Activated B cell treated with CpG ODN at 0.5 μM for 24 hours (primary cell): ENCODE measurements at regions of chr3 and their contacts with region 1.

Region 1: DNA sequence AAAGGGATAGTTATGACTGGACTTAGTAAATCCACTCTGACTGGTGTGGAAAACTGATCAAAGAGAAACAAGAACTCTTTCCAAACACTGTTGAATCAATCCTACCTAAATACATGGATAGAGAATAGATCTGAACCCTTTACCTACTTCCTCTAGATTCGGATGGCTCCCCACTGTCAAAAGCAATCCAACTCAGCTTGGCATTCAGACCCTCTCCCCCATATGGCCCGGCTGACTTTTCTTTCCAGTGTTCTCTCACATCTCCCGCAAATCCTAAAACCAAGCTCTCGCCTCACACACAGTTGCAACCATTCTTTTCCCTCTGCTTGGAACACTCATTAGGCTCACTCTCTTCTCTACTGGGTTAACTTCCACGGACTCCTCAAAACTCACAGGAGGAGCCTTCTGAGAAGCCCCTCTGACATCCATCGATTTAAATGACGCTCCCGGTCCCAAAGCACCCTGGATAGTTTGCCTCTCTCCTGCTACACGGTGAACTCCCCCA is 639 bp downstream of the SPICE1 start:
- DNase-seq: no peak
- ATAC-seq: no peak
- H3K4me3 Mint-ChIP-seq: no peak overlapping the region
- H3K27ac Mint-ChIP-seq: no peak overlapping the region
- H3K4me1 Mint-ChIP-seq: peaks cover 7% of the 10 kb centered on the region
- H3K27me3 Mint-ChIP-seq: peaks cover 16% of the 10 kb centered on the region
- CTCF ChIP-seq: no peak

Region 2: DNA sequence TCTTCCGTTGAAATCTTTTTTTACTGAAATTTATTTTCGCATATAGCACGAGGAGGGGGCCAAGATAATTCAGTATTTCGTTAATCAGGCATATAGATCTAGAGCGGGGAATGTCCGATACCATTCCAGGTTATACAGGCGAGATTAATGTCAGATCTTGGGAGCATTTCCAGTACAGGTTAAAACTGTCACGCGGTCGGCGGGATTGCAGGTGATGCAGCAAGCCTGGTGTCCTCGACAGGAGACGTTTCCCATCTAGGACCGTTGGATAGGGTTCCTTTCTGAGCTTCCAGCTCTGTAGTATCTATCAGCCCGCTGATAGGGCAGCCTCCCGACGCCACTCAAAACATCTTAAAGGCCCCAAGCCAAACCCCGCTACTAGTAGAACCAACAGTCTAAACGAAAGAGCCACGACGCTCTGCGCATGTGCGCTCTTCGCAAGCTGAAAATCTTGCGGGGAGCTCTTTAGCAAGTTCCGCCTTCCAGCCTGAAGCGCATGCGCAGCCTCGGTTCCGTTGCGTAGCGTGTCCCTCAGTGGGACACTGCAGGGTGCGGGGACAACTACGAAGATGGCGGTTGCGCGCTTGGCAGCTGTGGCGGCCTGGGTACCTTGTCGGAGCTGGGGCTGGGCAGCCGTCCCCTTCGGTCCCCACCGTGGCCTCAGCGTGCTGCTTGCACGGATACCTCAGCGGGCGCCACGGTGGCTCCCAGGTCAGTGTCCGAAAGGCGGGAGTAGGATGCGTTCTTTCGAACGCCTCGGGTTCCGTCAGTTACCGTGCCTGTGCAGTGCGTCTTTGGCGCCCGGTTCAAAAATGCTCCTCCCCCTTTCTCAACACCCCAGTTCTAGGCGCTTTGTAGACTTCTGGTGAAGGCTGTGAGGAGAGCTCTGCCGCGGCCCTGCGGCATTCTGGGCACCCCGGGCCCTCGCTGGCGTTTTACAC is 1535.6 kb before region 1 on chr3 and contains the start of gene ABHD10:
- CTCF ChIA-PET with region 1: no interaction called
- POLR2A ChIA-PET with region 1: interaction called, 11 read pairs
- intact Hi-C with region 1: no loop called
- DNase-seq: peak; percentile 90
- ATAC-seq: peak; percentile 94
- H3K4me3 Mint-ChIP-seq: peak within 1 kb of the TSS; percentile 93
- H3K27ac Mint-ChIP-seq: peak within 1 kb of the TSS; percentile 94
- H3K4me1 Mint-ChIP-seq: peaks cover 43% of the 10 kb centered on the region
- H3K27me3 Mint-ChIP-seq: no peaks in the 10 kb centered on the region
- CTCF ChIP-seq: no peak
- total RNA-seq, gene ABHD10: 25.2 and 28.4 TPM in 2 replicates

Region 3: DNA sequence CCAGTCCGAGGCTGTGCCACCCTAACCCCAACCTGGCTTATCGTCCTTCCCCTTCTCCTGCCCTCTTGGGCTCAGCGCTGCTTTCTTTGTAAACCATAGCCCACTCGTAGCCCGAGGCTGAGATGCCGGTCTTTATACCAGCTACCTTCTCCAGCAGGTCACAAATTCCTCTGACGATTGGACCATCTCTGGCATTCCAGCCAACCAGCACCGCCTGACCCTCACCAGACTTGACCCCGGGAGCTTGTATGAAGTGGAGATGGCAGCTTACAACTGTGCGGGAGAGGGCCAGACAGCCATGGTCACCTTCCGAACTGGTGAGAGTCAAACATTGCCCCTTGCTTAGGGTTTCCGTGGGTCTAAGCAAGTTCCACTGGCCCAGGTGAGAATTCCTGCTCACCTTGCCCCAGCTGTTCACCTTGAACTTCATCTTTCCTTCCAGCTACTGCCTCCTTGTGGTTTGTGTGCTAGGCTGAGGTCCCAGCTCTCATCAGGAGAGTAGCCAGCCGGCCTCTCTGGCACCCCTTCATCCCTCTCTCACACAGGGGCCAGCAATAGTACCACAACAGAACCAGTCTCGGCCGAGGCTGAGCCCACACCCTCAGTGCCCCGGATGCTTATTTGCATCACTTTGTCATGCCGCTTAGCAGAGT is 236.2 kb before region 1 on chr3:
- CTCF ChIA-PET with region 1: no interaction called
- POLR2A ChIA-PET with region 1: no interaction called
- intact Hi-C with region 1: no loop called
- DNase-seq: no peak
- ATAC-seq: no peak
- H3K4me3 Mint-ChIP-seq: peak overlapping the region; percentile 3
- H3K27ac Mint-ChIP-seq: peak overlapping the region; percentile 51
- H3K4me1 Mint-ChIP-seq: peaks cover 32% of the 10 kb centered on the region
- H3K27me3 Mint-ChIP-seq: no peaks in the 10 kb centered on the region
- CTCF ChIP-seq: no peak

Region 4: GRCh38 chr3:113495035-113495434 is 19.3 kb before region 1 on chr3:
- CTCF ChIA-PET with region 1: interaction called, 8 read pairs
- POLR2A ChIA-PET with region 1: interaction called, 6 read pairs
- intact Hi-C with region 1: loop called (anchors 1 kb)
- DNase-seq: no peak
- ATAC-seq: no peak
- H3K4me3 Mint-ChIP-seq: no peak overlapping the region
- H3K27ac Mint-ChIP-seq: no peak overlapping the region
- H3K4me1 Mint-ChIP-seq: no peaks in the 10 kb centered on the region
- H3K27me3 Mint-ChIP-seq: no peaks in the 10 kb centered on the region
- CTCF ChIP-seq: no peak

Region 5: GRCh38 chr3:113546414-113546893 is 32.1 kb after region 1 on chr3:
- CTCF ChIA-PET with region 1: no interaction called
- POLR2A ChIA-PET with region 1: interaction called, 23 read pairs
- intact Hi-C with region 1: no loop called
- DNase-seq: no peak
- ATAC-seq: peak; percentile 34
- H3K4me3 Mint-ChIP-seq: peak overlapping the region; percentile 16
- H3K27ac Mint-ChIP-seq: peak overlapping the region; percentile 5
- H3K4me1 Mint-ChIP-seq: peaks cover 29% of the 10 kb centered on the region
- H3K27me3 Mint-ChIP-seq: no peaks in the 10 kb centered on the region
- CTCF ChIP-seq: no peak

Region 6: GRCh38 chr3:113560271-113560670 is 46.0 kb after region 1 on chr3:
- CTCF ChIA-PET with region 1: no interaction called
- POLR2A ChIA-PET with region 1: no interaction called
- intact Hi-C with region 1: no loop called
- DNase-seq: no peak
- ATAC-seq: no peak
- H3K4me3 Mint-ChIP-seq: no peak overlapping the region
- H3K27ac Mint-ChIP-seq: no peak overlapping the region
- H3K4me1 Mint-ChIP-seq: peaks cover 17% of the 10 kb centered on the region
- H3K27me3 Mint-ChIP-seq: no peaks in the 10 kb centered on the region
- CTCF ChIP-seq: no peak

Region 7: DNA sequence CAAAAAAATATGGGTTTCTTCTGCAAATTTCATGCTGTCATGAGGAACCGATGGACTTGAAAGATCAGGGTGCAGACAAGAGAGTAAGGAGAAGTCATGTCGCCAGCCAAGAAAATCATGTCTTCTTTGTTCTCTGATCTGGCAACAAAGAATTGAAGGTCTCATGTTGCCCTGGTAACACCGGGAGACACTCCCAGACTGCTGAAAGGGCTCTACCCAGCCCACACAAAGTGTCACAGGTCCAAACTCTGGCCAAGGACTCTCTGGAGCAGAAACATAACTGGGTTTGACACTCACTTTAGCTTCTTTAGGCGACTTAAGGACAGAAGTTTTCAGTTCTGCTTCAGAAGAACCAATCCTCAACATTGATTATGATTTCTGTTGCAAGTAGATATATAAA is 60.9 kb after region 1 on chr3:
- CTCF ChIA-PET with region 1: interaction called, 13 read pairs
- POLR2A ChIA-PET with region 1: no interaction called
- intact Hi-C with region 1: no loop called
- DNase-seq: no peak
- ATAC-seq: no peak
- H3K4me3 Mint-ChIP-seq: no peak overlapping the region
- H3K27ac Mint-ChIP-seq: peak overlapping the region; percentile 31
- H3K4me1 Mint-ChIP-seq: peaks cover 5% of the 10 kb centered on the region
- H3K27me3 Mint-ChIP-seq: no peaks in the 10 kb centered on the region
- CTCF ChIP-seq: no peak

Region 8: GRCh38 chr3:113614402-113614801 is 100.1 kb after region 1 on chr3:
- CTCF ChIA-PET with region 1: no interaction called
- POLR2A ChIA-PET with region 1: no interaction called
- intact Hi-C with region 1: no loop called
- DNase-seq: no peak
- ATAC-seq: no peak
- H3K4me3 Mint-ChIP-seq: no peak overlapping the region
- H3K27ac Mint-ChIP-seq: no peak overlapping the region
- H3K4me1 Mint-ChIP-seq: peaks cover 2% of the 10 kb centered on the region
- H3K27me3 Mint-ChIP-seq: no peaks in the 10 kb centered on the region
- CTCF ChIP-seq: no peak

Region 9: GRCh38 chr3:113825090-113825489 is 310.8 kb after region 1 on chr3:
- CTCF ChIA-PET with region 1: no interaction called
- POLR2A ChIA-PET with region 1: no interaction called
- intact Hi-C with region 1: loop called (anchors 5 kb)
- DNase-seq: no peak
- ATAC-seq: peak; percentile 90
- H3K4me3 Mint-ChIP-seq: peak overlapping the region; percentile 64
- H3K27ac Mint-ChIP-seq: peak overlapping the region; percentile 71
- H3K4me1 Mint-ChIP-seq: peaks cover 43% of the 10 kb centered on the region
- H3K27me3 Mint-ChIP-seq: no peaks in the 10 kb centered on the region
- CTCF ChIP-seq: no peak

Region 10: DNA sequence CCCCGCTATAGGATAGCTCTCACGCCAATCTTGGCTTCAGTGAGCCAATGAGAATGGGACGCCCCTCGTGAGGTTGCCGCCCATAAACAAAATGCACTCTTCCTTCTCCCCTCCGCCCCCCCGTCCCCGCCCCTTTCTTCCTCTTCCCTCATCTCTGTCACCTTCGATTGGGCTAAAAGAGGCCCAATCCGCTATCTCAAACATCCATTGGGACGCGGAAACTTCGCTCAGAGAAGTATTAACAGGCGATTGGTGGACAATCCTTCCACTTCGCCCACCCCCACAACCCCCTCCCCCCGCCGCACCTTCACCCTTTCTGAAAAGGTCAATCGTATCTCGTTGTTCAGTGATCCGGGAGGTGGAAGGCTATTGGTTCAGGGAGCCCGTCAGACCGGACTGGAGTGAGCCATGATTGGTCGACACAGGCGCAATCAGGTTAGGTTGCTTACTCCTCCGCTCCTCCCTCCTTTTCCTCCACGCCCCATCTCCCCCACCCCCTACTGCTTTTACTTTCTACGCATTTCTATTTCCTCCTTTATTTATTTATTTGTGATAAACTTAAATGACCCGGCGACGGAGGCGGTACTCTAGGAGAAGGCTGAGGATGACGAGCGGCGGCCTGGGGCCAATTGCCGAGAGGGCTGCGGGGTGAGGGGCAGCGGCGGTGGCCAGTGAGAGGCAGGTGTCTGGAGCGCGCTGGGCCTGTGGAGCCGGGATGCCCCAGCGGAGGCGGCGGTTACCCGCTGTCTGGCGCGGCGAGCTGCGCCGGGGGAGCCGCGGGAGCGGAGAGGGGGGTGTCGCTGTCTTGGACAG is 1633.2 kb after region 1 on chr3:
- CTCF ChIA-PET with region 1: no interaction called
- POLR2A ChIA-PET with region 1: no interaction called
- intact Hi-C with region 1: loop called (anchors 10 kb)
- DNase-seq: peak; percentile 81
- ATAC-seq: peak; percentile 77
- H3K4me3 Mint-ChIP-seq: peak overlapping the region; percentile 94
- H3K27ac Mint-ChIP-seq: peak overlapping the region; percentile 98
- H3K4me1 Mint-ChIP-seq: peaks cover 34% of the 10 kb centered on the region
- H3K27me3 Mint-ChIP-seq: no peaks in the 10 kb centered on the region
- CTCF ChIP-seq: no peak